Posterior cingulate gyrus (tissue), 11 donors: ENCODE measurements at regions of chr4 and their contacts with region 1.

Region 1: GRCh38 chr4:73922766-73923630 is 53.8 kb downstream of the CXCL1 start:
- DNase-seq: no peak

Region 2: GRCh38 chr4:73662709-73663546 is 260.1 kb before region 1 on chr4:
- intact Hi-C with region 1: loop called (anchors 5 kb)
- DNase-seq: no peak

Region 3: DNA sequence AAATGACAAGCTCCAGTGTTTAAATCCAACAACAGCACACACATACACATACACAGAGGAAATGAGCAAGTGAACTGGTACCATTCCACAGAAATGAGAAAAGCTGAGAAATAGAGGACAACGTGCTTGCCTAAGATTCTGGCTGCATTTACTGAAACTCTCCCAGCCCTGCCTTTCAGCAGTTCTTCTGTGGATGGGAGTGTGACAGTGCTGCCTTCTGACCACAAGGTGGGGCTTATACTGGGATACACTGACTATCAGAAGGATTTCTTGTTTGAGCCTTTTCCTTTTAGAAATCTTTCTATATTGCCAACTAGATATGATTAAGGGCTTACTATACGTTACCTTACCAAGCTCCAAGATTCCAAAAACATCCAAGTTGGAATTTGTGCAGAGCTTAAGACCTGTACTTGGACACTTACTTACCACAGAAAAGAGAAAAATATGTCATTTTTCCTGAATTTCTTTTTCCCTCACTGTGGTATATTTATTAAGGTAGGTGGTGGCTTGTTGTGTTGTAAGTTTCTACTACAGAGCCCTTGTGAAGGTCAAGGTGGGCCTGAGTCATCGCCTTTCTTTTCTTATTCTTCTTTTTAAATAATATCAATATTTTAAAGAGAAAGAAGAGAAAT is 193.3 kb before region 1 on chr4:
- intact Hi-C with region 1: loop called (anchors 10 kb)
- DNase-seq: peak; percentile 29 to 90 (median 53)

Region 4: GRCh38 chr4:73988061-73988460 is 65.1 kb after region 1 on chr4 and contains the start of gene PPBP:
- intact Hi-C with region 1: no loop called
- DNase-seq: no peak